ENCODE measurements at regions of chr1 and their contacts with region 1.

Region 1: GRCh38 chr1:225923692-225924555 is at the start of gene PYCR2:
- DNase-seq: peak; percentile 95 to 97 (median 97)
- H3K4me3 ChIP-seq: peak within 1 kb of the TSS; percentile 60 to 95 (median 85)
- H3K27ac ChIP-seq: peak within 1 kb of the TSS; percentile 80 to 93
- H3K4me1 ChIP-seq: peaks cover 3 to 74% (median 65%) of the 10 kb centered on the region in 4 experiments
- H3K27me3 ChIP-seq: no peaks in the 10 kb centered on the region

Region 2: DNA sequence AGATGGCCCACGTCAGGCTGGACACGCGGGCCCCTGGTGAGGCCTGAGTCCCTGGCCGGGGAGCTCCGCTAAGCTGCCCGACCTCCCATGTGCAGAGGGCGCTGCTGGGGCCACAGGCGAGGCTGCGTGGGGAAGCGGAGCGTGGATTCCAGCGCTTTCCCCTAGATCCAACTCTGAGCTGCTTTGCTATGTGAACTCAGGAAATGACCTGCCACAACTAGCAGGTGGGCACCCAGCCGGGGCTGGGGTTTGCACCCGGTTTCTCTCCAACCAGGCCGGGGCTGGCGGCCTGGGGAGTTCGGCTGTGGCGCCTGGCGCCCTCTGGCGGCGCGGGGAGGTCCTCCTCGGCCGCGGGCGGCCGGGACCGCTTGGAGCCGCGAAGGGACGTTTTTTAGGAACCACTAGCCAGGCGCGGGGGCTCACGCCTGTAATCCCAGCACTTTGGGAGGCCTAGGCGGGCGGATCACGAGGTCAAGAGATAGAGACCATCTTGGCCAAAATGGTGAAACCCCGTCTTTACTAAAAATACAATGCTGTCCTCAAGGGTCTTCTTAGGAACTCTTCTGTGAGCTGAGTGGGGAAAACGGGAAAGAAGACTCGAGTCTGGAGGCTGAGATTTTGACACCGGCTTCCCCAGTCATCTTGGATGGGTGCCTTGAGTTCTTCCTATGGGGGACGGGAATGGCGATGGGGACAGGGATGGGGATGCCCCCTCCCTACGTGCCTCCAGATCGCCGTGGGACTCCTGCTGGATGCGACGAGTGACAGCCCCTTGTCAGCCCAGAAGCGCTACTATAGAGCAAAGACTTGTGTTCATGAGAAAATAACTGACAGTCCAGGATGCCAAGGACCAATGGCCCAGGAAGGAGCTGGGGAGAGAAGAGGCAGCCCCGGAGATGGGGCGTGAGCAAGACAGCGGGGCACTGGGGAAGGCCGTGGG is 12.5 kb before region 1 on chr1:
- CTCF ChIA-PET with region 1: interaction called, 13 read pairs
- POLR2A ChIA-PET with region 1: interaction called, 3 read pairs
- DNase-seq: peak; percentile 39 to 68 (median 64)
- H3K4me3 ChIP-seq: peak overlapping the region in 1 of 7 experiments; percentile 16
- H3K27ac ChIP-seq: no peak overlapping the region
- H3K4me1 ChIP-seq: peaks cover 0 to 8% (median 4%) of the 10 kb centered on the region in 4 experiments
- H3K27me3 ChIP-seq: no peaks in the 10 kb centered on the region

Region 3: DNA sequence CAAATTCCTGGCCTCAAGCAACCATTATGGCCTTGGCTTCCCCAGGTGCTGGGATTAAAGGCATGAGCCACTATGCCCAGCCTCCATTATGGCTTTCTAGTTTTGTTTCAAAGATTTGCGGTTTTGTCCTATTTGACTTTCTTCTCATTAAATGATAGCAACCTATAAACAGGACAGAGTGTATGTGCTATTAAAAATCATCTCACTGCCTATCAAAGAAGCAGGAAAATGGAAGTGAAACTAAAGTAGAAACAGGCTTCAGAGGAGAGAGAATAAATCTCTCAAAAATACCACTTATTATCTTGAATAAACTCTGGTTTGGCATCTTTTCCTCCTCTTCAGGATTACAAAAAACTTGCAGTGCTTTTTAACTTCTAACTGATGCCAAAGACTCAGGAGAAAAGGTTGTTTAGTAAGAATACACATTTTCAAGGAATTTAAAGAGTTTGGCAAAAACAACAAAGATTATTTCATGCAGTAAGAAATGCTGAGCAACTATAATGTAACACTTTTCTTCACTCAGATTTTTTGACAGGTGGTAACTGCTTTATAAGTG is 233.9 kb after region 1 on chr1:
- CTCF ChIA-PET with region 1: no interaction called
- POLR2A ChIA-PET with region 1: no interaction called
- DNase-seq: no peak
- H3K4me3 ChIP-seq: no peak overlapping the region
- H3K27ac ChIP-seq: no peak overlapping the region
- H3K4me1 ChIP-seq: no peaks in the 10 kb centered on the region
- H3K27me3 ChIP-seq: no peaks in the 10 kb centered on the region

Measured in common myeloid progenitor, CD34-positive (primary cell).